K562 (cell line): ENCODE measurements at regions of chr10 and their contacts with region 1.

Region 1: DNA sequence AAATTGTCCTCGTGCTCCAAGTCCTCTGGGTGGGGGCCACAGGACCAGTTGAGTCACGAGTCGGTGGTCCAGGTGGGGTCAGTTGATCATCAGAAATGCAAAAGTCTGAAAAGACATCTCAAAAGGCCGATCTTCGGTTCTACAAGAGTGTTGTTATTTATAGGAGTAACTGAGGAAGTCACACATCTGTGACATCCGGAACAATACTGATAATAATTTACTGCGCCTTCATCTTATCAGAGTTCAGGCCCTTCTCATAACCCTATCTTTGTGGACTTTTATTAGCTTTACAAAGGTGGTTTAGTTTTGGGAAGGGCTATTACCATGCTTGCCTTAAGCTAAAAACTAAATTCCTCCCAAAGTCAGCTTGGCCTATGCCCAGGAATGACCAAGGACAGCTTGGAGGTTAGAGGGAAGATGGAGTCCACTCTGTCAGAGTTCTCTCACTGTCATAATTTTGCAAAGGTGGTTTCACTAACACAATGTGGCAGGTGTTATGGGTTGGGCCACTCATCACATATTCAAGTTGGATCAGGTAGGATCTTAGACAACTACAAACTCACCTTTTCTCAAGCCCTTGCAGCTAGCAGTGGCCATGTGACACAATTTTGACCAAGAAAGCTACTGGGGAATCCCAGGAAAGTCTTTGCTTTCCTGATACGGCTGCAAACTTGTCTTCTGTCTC is 54.7 kb upstream of the CHST3 start:
- DNase-seq: no peak
- ATAC-seq: no peak
- H3K4me3 ChIP-seq: no peak overlapping the region
- H3K27ac ChIP-seq: no peak overlapping the region
- H3K4me1 ChIP-seq: peaks cover 3 to 12% of the 10 kb centered on the region in 2 experiments; a peak in 3 of 5 replicates
- H3K27me3 ChIP-seq: peaks cover 9% of the 10 kb centered on the region in 2 experiments; a peak in 4 of 5 replicates
- CTCF ChIP-seq: no peak
- EP300 ChIP-seq: no peak
- POLR2A ChIP-seq: no peak
- RAD21 ChIP-seq: no peak

Region 2: DNA sequence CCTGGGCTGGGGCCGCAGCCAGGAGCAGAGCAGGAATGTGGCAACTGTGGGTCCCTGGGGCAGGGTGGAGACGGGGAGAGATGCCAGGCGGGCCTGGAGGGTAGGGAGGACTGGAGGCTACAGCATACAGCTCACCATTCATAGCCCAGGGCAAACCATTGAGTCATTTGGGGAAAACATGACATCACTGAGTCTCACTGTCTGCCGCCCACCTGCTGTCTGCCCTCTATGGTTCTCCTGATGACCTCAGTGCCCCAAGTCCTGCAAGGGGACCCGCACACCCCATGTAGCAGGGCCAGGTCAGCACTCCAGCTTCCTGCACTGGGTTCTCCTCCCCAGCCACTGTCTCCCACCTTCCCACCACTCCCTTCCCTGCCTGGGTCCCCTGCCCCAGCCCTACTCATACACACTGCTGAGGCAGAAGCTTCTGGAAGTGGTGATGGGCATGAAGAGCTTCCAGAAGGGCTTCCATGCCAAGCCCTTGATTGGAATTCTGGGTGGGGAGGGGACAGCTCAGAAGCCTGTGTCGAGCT is 65.0 kb after region 1 on chr10:
- CTCF ChIA-PET with region 1: no interaction called
- POLR2A ChIA-PET with region 1: no interaction called
- in situ Hi-C with region 1: no loop called
- intact Hi-C with region 1: loop called (anchors 5 kb)
- DNase-seq: no peak
- ATAC-seq: no peak
- H3K4me3 ChIP-seq: no peak overlapping the region
- H3K27ac ChIP-seq: no peak overlapping the region
- H3K4me1 ChIP-seq: peaks cover 3 to 12% of the 10 kb centered on the region in 2 experiments; a peak in 3 of 5 replicates
- H3K27me3 ChIP-seq: peaks cover 28 to 73% of the 10 kb centered on the region in 2 experiments
- CTCF ChIP-seq: no peak
- EP300 ChIP-seq: no peak
- POLR2A ChIP-seq: no peak
- RAD21 ChIP-seq: no peak